ENCODE measurements at regions of chr14 and their contacts with region 1.

Region 1: GRCh38 chr14:78543433-78543832 is 373.3 kb downstream of the NRXN3 start:
- DNase-seq: no peak
- H3K4me3 ChIP-seq: no peak overlapping the region
- H3K27ac ChIP-seq: no peak overlapping the region
- H3K4me1 ChIP-seq: no peaks in the 10 kb centered on the region
- CTCF ChIP-seq: no peak

Region 2: DNA sequence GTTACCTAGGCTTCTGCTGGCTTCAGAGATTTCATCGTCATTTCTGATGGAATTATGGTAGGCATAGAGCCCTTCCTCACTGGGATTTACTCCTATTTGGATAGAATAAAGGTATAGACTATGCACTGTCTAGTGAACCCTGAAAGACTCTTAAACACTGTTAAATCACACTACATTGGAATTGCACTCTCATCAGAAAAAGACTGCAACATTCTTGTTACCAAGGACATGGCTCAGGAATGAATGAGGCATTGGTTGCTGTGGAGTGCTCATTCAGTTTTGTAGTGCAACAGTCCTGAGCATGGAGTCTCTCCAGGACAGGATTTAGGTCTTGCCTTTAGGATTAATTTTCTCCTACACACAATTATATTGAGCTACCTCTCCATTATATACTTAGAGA is 109.7 kb after region 1 on chr14:
- CTCF ChIA-PET with region 1: no interaction called
- POLR2A ChIA-PET with region 1: no interaction called
- intact Hi-C with region 1: no loop called
- DNase-seq: no peak
- H3K4me3 ChIP-seq: no peak overlapping the region
- H3K27ac ChIP-seq: no peak overlapping the region
- H3K4me1 ChIP-seq: no peaks in the 10 kb centered on the region
- CTCF ChIP-seq: no peak

Region 3: GRCh38 chr14:79011091-79011919 is 467.9 kb after region 1 on chr14:
- CTCF ChIA-PET with region 1: no interaction called
- POLR2A ChIA-PET with region 1: no interaction called
- intact Hi-C with region 1: loop called (anchors 10 kb)
- DNase-seq: peak; percentile 44
- H3K4me3 ChIP-seq: no peak overlapping the region
- H3K27ac ChIP-seq: no peak overlapping the region
- H3K4me1 ChIP-seq: no peaks in the 10 kb centered on the region
- CTCF ChIP-seq: peak; percentile 73